Activated B cell treated with CpG ODN at 0.5 μM for 24 hours (primary cell): ENCODE measurements at regions of chr18 and their contacts with region 1.

Region 1: DNA sequence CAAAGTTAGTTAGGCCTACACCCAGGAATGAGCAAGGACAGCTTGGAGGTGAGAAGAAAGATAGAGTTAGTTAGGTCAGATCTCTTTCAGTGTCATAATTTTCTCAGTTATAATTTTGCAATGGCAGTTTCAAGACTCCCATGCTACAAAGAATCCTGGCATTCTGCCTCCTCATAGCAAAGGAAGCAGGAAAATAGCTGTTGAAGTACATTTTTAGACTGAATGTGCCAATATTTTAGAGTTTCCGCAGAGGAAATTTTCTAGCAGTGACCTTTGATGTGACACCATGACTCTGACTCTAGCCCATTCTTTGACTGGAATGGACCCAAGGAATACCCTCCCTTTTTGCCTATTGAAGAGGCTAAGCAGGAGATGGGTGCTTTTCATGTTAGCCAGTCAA is 371.7 kb downstream of the PIK3C3 start:
- DNase-seq: no peak
- ATAC-seq: no peak
- H3K4me3 Mint-ChIP-seq: no peak overlapping the region
- H3K27ac Mint-ChIP-seq: no peak overlapping the region
- H3K4me1 Mint-ChIP-seq: no peaks in the 10 kb centered on the region
- H3K27me3 Mint-ChIP-seq: no peaks in the 10 kb centered on the region
- CTCF ChIP-seq: no peak

Region 2: DNA sequence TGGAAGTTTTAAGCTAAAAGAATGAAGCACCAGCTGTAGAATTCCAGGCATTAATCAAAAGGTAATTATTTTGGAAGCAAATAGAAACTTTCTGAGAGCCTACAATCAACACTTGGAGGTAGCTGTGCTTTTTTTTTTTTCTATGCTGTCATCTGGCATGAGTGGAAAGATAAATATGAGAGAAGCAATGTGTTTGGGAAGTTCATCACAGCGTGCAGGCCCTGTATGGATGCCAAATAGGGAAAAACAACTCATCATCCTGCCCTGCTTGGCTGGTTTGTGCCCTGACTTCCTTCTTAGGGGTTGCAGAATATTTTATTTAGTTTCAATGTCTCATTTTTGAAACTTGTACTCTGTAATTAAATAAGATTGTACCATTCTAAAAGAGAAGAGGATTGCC is 65.7 kb after region 1 on chr18:
- CTCF ChIA-PET with region 1: no interaction called
- POLR2A ChIA-PET with region 1: no interaction called
- intact Hi-C with region 1: loop called (anchors 10 kb)
- DNase-seq: no peak
- ATAC-seq: no peak
- H3K4me3 Mint-ChIP-seq: no peak overlapping the region
- H3K27ac Mint-ChIP-seq: no peak overlapping the region
- H3K4me1 Mint-ChIP-seq: no peaks in the 10 kb centered on the region
- H3K27me3 Mint-ChIP-seq: no peaks in the 10 kb centered on the region
- CTCF ChIP-seq: no peak